Activated naive CD4-positive, alpha-beta T cell treated with anti-CD3 and anti-CD28 coated beads for 36 hours (primary cell): ENCODE measurements at regions of chr14 and their contacts with region 1.

Region 1: DNA sequence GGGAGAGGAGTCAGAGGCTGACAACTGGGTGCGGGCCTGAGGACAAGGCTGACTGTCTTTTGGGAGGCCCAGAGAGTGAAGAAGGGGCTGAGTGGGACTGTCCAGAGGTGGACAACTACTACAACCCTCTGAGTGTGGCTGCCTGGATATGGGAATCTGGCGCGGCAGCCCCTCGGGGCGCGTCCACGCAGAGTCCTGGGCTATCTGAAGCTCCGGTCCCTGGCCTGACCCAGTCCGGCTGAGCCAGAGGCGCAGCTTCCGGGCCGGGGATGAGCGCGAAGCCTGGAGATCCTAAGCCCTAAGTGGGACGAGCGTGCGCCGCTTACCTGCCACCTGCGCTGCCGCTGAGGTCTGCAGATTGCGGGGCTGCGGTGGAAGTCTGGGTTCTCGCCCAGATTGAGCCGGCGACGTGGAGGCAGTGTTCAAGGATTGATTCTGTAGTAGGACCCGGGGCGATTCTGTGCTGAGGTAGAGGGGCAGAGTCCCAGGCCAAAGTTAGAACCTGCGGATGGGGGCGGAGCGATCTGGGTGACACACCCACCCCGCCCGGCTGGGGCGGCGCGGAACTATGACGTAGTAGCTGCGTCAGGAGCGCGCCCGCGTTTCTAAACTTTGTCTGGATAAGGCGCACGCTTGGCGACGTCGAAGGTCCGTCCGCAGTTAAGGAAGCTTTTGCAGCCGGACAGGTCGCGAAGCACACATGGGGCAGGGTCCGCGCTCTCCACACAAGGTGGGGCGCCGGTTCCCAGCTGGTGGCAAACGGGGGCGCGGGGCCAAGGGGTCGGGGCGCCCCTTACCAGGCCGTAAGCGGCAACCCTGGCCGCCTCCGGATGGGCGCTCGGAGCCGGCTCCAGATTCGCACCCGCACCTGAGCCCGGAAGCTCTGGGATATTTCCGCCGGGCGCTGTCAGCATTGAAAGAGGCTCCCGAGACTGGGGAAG is at the starts of genes DHRS1 and NOP9:
- DNase-seq: peak; percentile 94
- H3K4me3 Mint-ChIP-seq: peak within 1 kb of the TSS; percentile 87
- H3K27ac Mint-ChIP-seq: peak within 1 kb of the TSS; percentile 89
- H3K4me1 Mint-ChIP-seq: peaks cover 47% of the 10 kb centered on the region
- H3K27me3 Mint-ChIP-seq: no peaks in the 10 kb centered on the region
- total RNA-seq, gene DHRS1: 11.8 to 13.8 TPM
- total RNA-seq, gene NOP9: 24.8 to 26.4 TPM

Region 2: DNA sequence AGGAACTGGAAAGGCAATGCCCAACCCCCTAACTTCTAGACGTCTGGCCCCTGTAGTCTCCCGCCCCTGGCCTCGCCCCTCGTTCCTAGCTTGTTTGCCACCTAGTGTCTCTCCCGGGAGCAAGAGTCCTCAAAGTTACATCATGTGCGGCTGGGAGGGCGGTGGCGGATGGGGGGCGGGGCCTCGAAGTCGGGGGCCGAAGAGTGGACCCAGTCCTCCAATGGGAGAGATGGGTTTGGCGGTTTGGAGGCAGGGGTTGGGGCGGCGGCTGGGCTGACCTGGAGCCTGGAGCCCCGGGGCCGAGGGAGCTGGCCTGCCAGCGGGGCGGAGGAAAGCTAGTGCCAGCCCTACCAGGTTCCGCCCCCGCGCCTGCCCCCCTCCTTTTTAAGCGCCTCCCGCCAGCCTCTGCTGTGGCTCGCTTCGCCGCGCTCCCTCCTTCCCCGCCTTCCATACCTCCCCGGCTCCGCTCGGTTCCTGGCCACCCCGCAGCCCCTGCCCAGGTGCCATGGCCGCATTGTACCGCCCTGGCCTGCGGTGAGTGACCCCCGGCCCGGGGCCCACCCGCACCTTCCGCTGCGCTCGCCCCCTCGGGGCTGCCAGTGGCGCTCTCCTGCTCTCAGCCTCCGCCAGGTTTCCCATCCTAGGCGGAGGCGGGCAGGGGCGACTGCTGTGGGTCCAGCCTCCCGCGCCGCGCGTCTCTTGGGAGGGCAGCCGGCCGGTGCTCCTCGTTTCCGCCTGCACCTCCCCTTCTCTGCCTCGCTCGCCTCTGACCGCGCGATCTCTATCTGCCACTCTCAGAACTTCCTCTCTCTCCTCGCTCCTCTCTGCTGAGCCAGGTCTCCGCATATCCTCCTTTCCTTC is 205.4 kb before region 1 on chr14 and contains the start of gene PCK2:
- CTCF ChIA-PET with region 1: interaction called, 3 read pairs
- intact Hi-C with region 1: loop called (anchors 5 kb)
- DNase-seq: peak; percentile 94
- H3K4me3 Mint-ChIP-seq: peak within 1 kb of the TSS; percentile 99
- H3K27ac Mint-ChIP-seq: peak within 1 kb of the TSS; percentile 98
- H3K4me1 Mint-ChIP-seq: peaks cover 32% of the 10 kb centered on the region
- H3K27me3 Mint-ChIP-seq: no peaks in the 10 kb centered on the region
- total RNA-seq, gene PCK2: 117 TPM

Region 3: DNA sequence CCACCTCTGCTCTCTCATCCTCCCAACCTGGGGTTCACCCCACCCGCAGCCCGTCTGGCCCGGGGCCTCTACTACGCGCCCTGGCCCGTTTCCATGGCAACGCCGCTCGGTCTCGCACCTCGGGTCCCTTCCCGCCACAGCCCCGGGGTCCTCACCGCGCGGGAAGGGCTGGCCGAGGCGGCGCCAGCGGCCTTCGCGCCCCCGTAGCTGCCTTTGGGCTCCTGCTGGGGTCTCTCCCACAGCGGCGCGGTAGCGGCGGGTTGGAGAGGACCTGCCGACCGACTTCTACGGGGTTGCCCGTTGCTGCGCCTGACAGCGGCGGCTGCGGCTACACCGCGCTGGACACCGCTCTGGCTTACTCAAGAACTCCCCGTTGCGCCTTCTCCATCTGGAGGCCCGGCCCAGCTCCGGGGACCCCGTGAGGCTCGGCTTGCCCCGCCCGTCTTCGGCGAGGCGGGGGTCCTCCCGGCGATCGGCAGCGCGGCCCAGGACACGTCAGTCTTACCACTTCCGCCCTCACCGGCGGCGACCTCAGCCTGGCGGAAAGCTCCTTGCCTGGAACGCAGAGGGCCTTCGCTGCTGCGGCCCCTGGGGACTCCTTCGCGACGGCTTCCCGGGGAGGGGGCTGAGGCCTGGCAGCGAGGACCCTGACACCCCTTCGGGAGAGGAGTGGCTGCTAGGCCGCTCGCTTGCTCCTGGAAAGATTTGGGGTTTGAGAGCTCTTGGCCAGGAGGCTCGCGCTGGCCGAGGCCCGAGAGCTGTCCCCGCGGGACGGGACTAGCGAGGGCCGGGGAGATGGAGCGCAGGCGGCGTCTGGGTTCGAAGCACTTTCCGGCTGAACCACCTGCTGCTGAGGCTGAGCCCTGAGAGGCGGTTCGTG is 104.1 kb before region 1 on chr14 and contains the start of gene TM9SF1:
- CTCF ChIA-PET with region 1: interaction called, 5 read pairs
- intact Hi-C with region 1: loop called (anchors 1 kb)
- DNase-seq: peak; percentile 89
- H3K4me3 Mint-ChIP-seq: peak within 1 kb of the TSS; percentile 96
- H3K27ac Mint-ChIP-seq: peak within 1 kb of the TSS; percentile 93
- H3K4me1 Mint-ChIP-seq: peaks cover 56% of the 10 kb centered on the region
- H3K27me3 Mint-ChIP-seq: no peaks in the 10 kb centered on the region
- total RNA-seq, gene TM9SF1: 14.7 to 15.1 TPM

Region 4: GRCh38 chr14:24241829-24242443 is 57.6 kb before region 1 on chr14:
- CTCF ChIA-PET with region 1: interaction called, 310 read pairs
- intact Hi-C with region 1: loop called (anchors 1 kb)
- DNase-seq: peak; percentile 94
- H3K4me3 Mint-ChIP-seq: peak overlapping the region; percentile 97
- H3K27ac Mint-ChIP-seq: peak overlapping the region; percentile 100
- H3K4me1 Mint-ChIP-seq: peaks cover 49% of the 10 kb centered on the region
- H3K27me3 Mint-ChIP-seq: no peaks in the 10 kb centered on the region

Region 5: GRCh38 chr14:24279301-24280186 is 20.0 kb before region 1 on chr14:
- CTCF ChIA-PET with region 1: interaction called, 154 read pairs
- intact Hi-C with region 1: loop called (anchors 1 kb)
- DNase-seq: peak; percentile 90
- H3K4me3 Mint-ChIP-seq: peak overlapping the region; percentile 20
- H3K27ac Mint-ChIP-seq: peak overlapping the region; percentile 80
- H3K4me1 Mint-ChIP-seq: peaks cover 52% of the 10 kb centered on the region
- H3K27me3 Mint-ChIP-seq: no peaks in the 10 kb centered on the region

Region 6: GRCh38 chr14:24431569-24432258 is 132.2 kb after region 1 on chr14:
- CTCF ChIA-PET with region 1: interaction called, 14 read pairs
- intact Hi-C with region 1: no loop called
- DNase-seq: peak; percentile 95
- H3K4me3 Mint-ChIP-seq: peak overlapping the region; percentile 95
- H3K27ac Mint-ChIP-seq: peak overlapping the region; percentile 97
- H3K4me1 Mint-ChIP-seq: peaks cover 39% of the 10 kb centered on the region
- H3K27me3 Mint-ChIP-seq: no peaks in the 10 kb centered on the region